ENCODE measurements at regions of chr19 and their contacts with region 1.

Region 1: GRCh38 chr19:55407800-55408532 is 378 bp upstream of the UBE2S start:
- DNase-seq: peak; percentile 99
- H3K4me3 ChIP-seq: peak overlapping the region; percentile 83
- H3K27ac ChIP-seq: peak overlapping the region; percentile 100
- H3K27me3 ChIP-seq: no peaks in the 10 kb centered on the region
- CTCF ChIP-seq: no peak

Region 2: DNA sequence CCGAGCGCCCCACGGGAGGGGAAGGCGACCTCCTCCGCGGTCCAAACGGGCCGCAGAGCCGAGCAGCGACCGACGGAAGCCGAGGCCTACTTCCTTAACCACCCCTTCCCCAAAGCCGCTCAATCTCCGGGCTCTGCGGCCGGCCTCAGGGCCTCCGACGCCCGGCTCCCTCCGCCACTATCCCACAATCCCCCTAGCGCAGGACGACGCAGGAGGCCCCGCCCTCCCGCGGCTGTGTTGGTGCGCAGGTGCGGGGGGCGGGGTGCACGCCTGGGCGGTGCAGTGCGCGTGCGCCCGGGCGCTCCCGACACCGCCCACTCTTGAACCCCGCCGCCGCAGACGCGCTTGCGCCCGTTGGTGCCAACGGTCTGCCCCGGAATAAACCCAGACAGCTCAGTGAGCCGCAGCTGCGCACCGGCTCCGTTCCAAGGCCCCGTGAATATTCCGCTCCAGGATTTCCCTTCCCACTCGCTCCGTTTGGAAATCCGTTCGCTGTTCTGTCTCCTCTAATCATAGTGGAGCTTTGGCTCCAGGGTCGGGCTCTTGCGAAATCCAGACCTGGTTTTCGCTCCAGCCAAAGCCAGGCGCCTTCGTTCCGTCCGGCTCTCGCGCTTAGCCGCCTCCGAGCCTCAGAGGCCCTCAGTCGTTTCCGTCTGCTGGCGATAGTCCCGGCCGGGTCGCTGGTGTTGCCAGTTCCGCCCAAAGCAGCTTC is 149.0 kb before region 1 on chr19 and contains the start of gene PPP6R1:
- CTCF ChIA-PET with region 1: no interaction called
- POLR2A ChIA-PET with region 1: interaction called, 18 read pairs
- DNase-seq: peak; percentile 100
- H3K4me3 ChIP-seq: peak within 1 kb of the TSS; percentile 87
- H3K27ac ChIP-seq: peak within 1 kb of the TSS; percentile 89
- H3K27me3 ChIP-seq: no peaks in the 10 kb centered on the region
- CTCF ChIP-seq: no peak
- polyA plus RNA-seq, gene PPP6R1: 24.5 and 30.1 TPM in 2 replicates

Region 3: GRCh38 chr19:55369671-55370304 is 38.2 kb before region 1 on chr19:
- CTCF ChIA-PET with region 1: no interaction called
- POLR2A ChIA-PET with region 1: interaction called, 27 read pairs
- DNase-seq: peak; percentile 42
- H3K4me3 ChIP-seq: peak overlapping the region; percentile 76
- H3K27ac ChIP-seq: peak overlapping the region; percentile 85
- H3K27me3 ChIP-seq: no peaks in the 10 kb centered on the region
- CTCF ChIP-seq: no peak

Region 4: GRCh38 chr19:55418185-55418584 is 10.2 kb after region 1 on chr19:
- CTCF ChIA-PET with region 1: interaction called, 16 read pairs
- POLR2A ChIA-PET with region 1: interaction called, 11 read pairs
- DNase-seq: peak; percentile 73
- H3K4me3 ChIP-seq: no peak overlapping the region
- H3K27ac ChIP-seq: no peak overlapping the region
- H3K27me3 ChIP-seq: peaks cover 5% of the 10 kb centered on the region
- CTCF ChIP-seq: peak; percentile 82

Region 5: DNA sequence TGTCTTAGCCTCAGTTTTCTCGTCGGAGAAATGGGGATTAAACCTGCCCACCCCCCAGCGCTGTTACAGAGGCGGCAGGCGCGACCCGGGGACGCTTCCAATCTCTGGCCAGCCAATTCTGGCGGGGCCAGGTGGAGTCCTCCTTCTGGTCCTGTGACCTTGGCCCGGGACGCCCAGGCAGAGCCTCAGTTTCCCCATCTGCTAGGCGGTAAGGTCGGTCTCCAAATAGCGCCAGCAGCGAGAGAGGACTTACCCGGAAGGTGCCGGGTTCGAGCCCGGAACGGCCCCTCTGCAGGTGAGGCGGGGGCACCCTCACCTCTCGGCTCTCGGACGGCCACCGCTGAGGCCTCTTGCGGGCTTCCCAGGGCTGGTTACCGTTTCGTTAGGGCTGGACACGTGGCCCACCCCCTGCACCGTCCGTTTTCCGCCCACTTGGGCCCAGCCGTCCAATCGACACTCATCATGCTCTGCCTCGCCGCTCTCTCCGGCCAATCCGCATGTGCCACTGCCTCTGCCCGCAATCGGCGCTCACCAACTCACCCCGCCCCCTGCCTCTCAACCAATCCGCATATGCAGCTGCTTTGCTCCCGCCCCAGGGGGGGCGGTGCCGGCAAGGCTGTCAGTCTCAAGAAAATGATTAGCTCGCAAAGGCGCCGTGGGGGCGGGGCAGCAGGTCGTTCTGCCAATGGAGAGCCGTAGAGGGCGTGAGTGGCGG is 53.5 kb after region 1 on chr19 and contains the start of gene ISOC2:
- CTCF ChIA-PET with region 1: no interaction called
- POLR2A ChIA-PET with region 1: interaction called, 12 read pairs
- DNase-seq: peak; percentile 99
- H3K4me3 ChIP-seq: peak within 1 kb of the TSS; percentile 97
- H3K27ac ChIP-seq: peak within 1 kb of the TSS; percentile 90
- H3K27me3 ChIP-seq: peaks cover 3% of the 10 kb centered on the region
- CTCF ChIP-seq: no peak
- polyA plus RNA-seq, gene ISOC2: 45.1 and 72.2 TPM in 2 replicates

Region 6: GRCh38 chr19:55503502-55504251 is 95.7 kb after region 1 on chr19:
- CTCF ChIA-PET with region 1: interaction called, 3 read pairs
- POLR2A ChIA-PET with region 1: interaction called, 18 read pairs
- DNase-seq: peak; percentile 80
- H3K4me3 ChIP-seq: peak overlapping the region; percentile 69
- H3K27ac ChIP-seq: no peak overlapping the region
- H3K27me3 ChIP-seq: no peaks in the 10 kb centered on the region
- CTCF ChIP-seq: peak; percentile 96

Measured in AG04450 (cell line).